GM12878 (cell line): ENCODE measurements at regions of chr22 and their contacts with region 1.

Region 1: DNA sequence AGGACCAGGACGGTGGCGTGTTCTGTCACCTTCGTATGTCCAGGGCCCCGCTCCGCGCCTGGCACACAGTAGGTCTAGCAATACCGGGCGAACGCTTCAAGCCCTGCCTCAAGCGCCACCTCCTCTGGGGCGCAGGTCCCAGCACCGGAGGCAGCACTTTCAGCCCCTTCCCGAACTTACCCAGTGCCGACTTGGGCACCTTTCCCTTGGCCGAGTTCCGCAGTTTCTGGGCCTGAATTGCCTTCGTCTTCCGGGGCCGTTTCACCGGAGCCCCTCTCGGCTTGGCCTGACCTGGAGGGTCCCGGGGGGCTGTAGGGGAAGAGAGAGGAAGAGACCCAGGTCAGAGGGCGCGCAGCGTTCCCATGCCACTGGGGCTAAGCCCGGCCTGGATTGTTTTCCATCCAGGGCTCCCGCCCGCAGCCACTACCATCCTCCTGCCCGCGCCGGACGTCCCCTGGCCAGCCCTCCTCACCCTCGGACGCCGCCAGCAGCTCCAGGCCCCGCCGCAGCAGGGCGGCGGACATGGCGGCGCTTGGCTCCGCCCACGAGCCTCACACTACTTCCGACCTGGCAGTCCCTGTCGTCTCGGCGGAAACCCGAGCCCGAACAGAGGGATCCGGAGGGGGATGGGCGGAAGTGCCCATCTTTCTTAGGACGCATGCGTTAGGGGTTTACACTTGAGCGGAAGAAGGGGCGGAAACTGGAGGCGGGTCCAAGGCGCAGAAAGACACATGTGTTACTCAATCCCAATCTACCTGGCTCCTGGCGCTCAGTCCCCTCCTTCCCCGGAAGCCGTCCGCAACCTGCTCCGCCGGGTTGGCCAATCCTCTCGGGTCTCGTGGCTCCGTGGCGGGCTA is at the start of gene RPS19BP1:
- DNase-seq: peak; percentile 100
- ATAC-seq: peak; percentile 80
- H3K4me3 ChIP-seq: peak within 1 kb of the TSS; percentile 99
- H3K27ac ChIP-seq: peak within 1 kb of the TSS; percentile 96
- H3K4me1 ChIP-seq: peaks cover 34% of the 10 kb centered on the region
- H3K27me3 ChIP-seq: no peaks in the 10 kb centered on the region
- CTCF ChIP-seq: no peak
- EP300 ChIP-seq: no peak
- POLR2A ChIP-seq: peak; percentile 99
- RAD21 ChIP-seq: no peak
- polyA plus RNA-seq, gene RPS19BP1: 2.7 to 14.3 TPM

Region 2: DNA sequence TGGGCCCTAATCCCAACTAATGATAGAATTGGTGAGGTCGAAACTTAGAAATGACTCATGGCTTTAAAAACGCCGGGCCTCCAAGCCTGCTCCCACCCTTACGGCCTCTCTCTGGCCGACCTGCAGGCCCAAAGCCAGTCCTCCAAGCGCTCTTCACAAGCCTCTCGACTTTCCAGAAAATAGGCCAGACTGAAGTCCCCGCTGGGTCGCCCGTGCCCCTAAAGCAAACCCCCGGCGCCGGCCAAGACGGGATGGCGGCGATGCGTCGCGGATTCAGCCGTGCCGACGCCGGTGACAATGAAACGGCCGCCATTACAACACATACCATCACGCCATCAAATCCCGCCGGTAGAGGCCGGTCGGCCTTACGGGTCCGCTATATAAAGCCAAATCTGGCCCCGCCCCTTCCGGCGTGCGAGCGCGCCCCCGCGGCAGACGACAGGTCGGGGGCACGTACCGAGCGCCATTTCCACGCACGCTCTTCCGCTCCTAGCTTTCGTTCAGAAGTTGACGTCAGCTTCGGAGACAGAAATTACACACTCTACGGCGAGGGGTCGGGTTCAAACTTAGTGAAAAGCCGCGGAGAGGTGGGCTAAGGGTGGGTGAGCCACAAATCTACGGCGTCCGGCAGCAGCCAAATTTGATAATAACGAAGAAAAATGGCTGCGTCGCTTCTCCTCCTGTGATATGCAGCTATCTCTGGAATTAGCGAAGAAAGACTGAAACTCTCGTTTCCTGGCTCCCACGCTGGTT is 213.0 kb before region 1 on chr22 and contains the start of gene RPL3:
- CTCF ChIA-PET with region 1: interaction called, 88 read pairs
- POLR2A ChIA-PET with region 1: interaction called, 8 read pairs
- RAD21 ChIA-PET with region 1: interaction called, 31 read pairs
- SMC1A ChIA-PET with region 1: interaction called, 5 read pairs
- in situ Hi-C with region 1: no loop called
- intact Hi-C with region 1: loop called (anchors 2 kb)
- DNase-seq: peak; percentile 97
- ATAC-seq: peak; percentile 83
- H3K4me3 ChIP-seq: peak within 1 kb of the TSS; percentile 85
- H3K27ac ChIP-seq: peak within 1 kb of the TSS; percentile 89
- H3K4me1 ChIP-seq: peaks cover 20% of the 10 kb centered on the region
- H3K27me3 ChIP-seq: no peaks in the 10 kb centered on the region
- CTCF ChIP-seq: peak in 2 of 3 experiments; percentile 7 to 8; a peak in 2 of 6 replicates
- EP300 ChIP-seq: 0 out of 4 replicates have a peak, but pooled peaks of 1 of the 2 experiments have one; percentile 2
- POLR2A ChIP-seq: peak; percentile 99
- RAD21 ChIP-seq: no peak
- polyA plus RNA-seq, gene RPL3: 4,597 to 6,791 TPM

Region 3: DNA sequence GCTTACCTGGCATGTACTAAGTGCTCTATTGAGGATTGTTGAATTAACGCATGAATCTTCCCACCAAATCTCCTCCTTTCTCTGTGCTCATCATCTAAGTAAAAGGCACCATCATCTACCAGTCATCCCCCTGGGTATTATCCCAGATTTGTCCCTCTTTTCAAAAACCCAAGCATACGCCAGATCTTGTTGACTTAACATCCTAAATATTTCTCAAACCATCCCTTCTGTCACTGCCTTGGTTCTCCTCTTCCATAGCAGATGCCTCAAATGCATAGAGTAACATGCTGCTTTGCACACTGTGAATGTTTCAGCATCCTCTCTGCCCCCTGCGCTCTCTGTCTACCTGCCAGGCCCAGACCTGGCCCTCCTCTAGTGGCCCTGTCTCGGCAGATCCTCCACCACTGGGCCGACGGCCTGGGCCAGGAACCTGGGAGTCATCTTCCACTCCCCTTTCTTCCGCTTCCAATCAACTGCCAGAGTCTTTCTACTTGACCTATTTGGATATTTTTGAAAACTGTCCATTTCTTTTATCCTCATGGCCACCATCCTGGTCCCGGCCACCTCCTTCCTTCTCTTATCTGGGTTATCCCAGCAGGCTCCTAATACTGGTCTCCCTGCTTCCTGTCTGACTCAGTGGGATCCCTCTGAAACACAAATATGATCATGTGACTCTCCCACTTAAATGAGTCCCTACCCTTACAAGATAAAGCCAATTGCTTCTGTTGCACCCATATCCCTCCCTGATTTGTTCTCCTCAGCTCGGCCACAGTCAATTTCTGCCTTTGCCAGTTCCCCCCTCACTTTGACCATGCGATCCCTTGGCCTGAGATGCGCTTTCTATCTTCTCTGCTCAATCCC is 136.3 kb before region 1 on chr22:
- CTCF ChIA-PET with region 1: interaction called, 19 read pairs
- POLR2A ChIA-PET with region 1: interaction called, 9 read pairs
- RAD21 ChIA-PET with region 1: interaction called, 26 read pairs
- SMC1A ChIA-PET with region 1: interaction called, 9 read pairs
- in situ Hi-C with region 1: no loop called
- intact Hi-C with region 1: no loop called
- DNase-seq: no peak
- ATAC-seq: no peak
- H3K4me3 ChIP-seq: no peak overlapping the region
- H3K27ac ChIP-seq: no peak overlapping the region
- H3K4me1 ChIP-seq: peaks cover 7% of the 10 kb centered on the region
- H3K27me3 ChIP-seq: no peaks in the 10 kb centered on the region
- CTCF ChIP-seq: no peak
- EP300 ChIP-seq: no peak
- POLR2A ChIP-seq: no peak
- RAD21 ChIP-seq: no peak

Region 4: GRCh38 chr22:39490135-39490798 is 42.2 kb before region 1 on chr22:
- CTCF ChIA-PET with region 1: interaction called, 372 read pairs
- POLR2A ChIA-PET with region 1: interaction called, 10 read pairs
- RAD21 ChIA-PET with region 1: interaction called, 30 read pairs
- SMC1A ChIA-PET with region 1: interaction called, 21 read pairs
- in situ Hi-C with region 1: no loop called
- intact Hi-C with region 1: loop called (anchors 1 kb)
- DNase-seq: no peak
- ATAC-seq: peak; percentile 99
- H3K4me3 ChIP-seq: no peak overlapping the region
- H3K27ac ChIP-seq: no peak overlapping the region
- H3K4me1 ChIP-seq: peaks cover 7% of the 10 kb centered on the region; the same call in 1 of the 2 replicates
- H3K27me3 ChIP-seq: no peaks in the 10 kb centered on the region
- CTCF ChIP-seq: no peak
- EP300 ChIP-seq: no peak
- POLR2A ChIP-seq: 0 out of 2 replicates have a peak, but pooled peaks have one; percentile 30
- RAD21 ChIP-seq: no peak

Region 5: DNA sequence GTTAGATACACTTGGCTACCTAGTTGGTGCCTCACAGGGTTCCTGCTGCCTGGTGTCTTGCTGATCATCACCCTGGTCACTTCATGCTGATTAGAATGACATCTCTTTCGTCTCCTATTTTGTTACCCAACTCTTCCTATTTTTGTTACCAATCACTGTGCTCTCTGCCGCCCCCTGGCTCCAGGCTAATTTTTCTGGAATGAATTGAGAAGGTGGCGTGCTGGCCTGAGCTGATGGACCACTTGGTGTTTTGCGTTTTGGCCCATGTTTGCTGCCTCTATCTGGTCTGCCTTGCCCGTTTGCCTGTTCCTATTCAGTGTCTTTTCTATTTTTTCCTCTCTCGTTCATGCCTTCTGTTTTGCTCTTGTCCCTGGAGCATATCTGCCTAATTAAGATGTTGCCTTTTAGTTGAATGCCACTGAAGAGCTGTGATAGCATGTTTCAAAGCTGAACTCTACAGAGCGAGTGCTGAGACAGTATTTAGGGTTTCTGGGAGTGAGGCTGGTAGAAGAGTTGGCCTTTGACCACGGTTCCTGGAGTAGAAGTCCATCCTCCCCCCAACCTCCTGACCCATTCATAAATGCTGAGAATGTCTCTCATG is 18.0 kb before region 1 on chr22:
- CTCF ChIA-PET with region 1: interaction called, 75 read pairs
- POLR2A ChIA-PET with region 1: interaction called, 32 read pairs
- RAD21 ChIA-PET with region 1: interaction called, 44 read pairs
- SMC1A ChIA-PET with region 1: interaction called, 30 read pairs
- in situ Hi-C with region 1: no loop called
- intact Hi-C with region 1: no loop called
- DNase-seq: no peak
- ATAC-seq: peak; percentile 59
- H3K4me3 ChIP-seq: no peak overlapping the region
- H3K27ac ChIP-seq: no peak overlapping the region
- H3K4me1 ChIP-seq: peaks cover 16% of the 10 kb centered on the region
- H3K27me3 ChIP-seq: no peaks in the 10 kb centered on the region
- CTCF ChIP-seq: peak; percentile 66 to 74 (median 70)
- EP300 ChIP-seq: no peak
- POLR2A ChIP-seq: no peak
- RAD21 ChIP-seq: peak; percentile 51

Region 6: DNA sequence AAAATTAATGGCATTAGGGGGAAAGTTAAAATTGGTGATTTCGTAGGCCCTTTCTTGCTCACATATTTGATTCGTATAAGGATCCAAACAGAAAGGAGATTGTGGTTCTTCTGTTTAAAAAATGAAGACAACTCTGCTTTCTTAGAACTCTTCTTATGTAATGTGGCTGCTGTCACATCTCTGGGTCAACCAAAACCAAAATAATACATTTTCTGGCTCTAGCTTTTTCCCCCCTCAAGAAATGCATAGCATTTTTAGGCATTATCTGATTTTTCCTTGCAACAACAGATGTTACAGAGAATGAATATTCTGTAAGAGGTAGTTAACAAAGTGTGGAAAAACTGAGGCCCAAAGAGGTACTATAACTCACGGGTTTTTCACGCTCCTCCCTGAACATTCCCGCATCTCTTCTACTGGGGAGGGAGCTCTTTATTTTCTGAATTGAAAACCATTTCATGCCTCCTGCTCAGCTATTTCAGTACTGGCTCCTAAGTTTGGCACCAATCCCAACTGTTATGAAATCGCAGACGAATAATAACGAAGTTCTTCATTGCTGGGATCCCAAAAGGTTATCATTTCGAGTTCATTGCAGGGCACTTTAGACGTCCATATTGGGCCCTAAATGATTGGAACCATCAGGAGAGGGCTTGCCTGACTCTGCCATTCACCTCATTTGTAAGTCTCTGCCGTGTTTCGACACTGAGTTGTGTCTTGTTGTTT is 385.5 kb after region 1 on chr22:
- CTCF ChIA-PET with region 1: no interaction called
- POLR2A ChIA-PET with region 1: no interaction called
- RAD21 ChIA-PET with region 1: no interaction called
- SMC1A ChIA-PET with region 1: no interaction called
- in situ Hi-C with region 1: no loop called
- intact Hi-C with region 1: no loop called
- DNase-seq: no peak
- ATAC-seq: no peak
- H3K4me3 ChIP-seq: no peak overlapping the region
- H3K27ac ChIP-seq: no peak overlapping the region
- H3K4me1 ChIP-seq: peaks cover 9% of the 10 kb centered on the region; the same call in 1 of the 2 replicates
- H3K27me3 ChIP-seq: no peaks in the 10 kb centered on the region
- CTCF ChIP-seq: no peak
- EP300 ChIP-seq: no peak
- POLR2A ChIP-seq: no peak
- RAD21 ChIP-seq: no peak

Region 7: GRCh38 chr22:40044102-40044869 is 511.8 kb after region 1 on chr22:
- CTCF ChIA-PET with region 1: interaction called, 21 read pairs
- POLR2A ChIA-PET with region 1: interaction called, 9 read pairs
- RAD21 ChIA-PET with region 1: interaction called, 4 read pairs
- SMC1A ChIA-PET with region 1: interaction called, 3 read pairs
- in situ Hi-C with region 1: no loop called
- intact Hi-C with region 1: no loop called
- DNase-seq: peak; percentile 99
- ATAC-seq: peak; percentile 97
- H3K4me3 ChIP-seq: peak overlapping the region; percentile 72
- H3K27ac ChIP-seq: peak overlapping the region; percentile 81
- H3K4me1 ChIP-seq: peaks cover 9% of the 10 kb centered on the region
- H3K27me3 ChIP-seq: 0 out of 4 replicates have a peak, but pooled peaks cover 0 to 1% of the 10 kb centered on the region in 2 experiments
- CTCF ChIP-seq: no peak
- EP300 ChIP-seq: no peak
- POLR2A ChIP-seq: peak; percentile 94
- RAD21 ChIP-seq: no peak